Naive thymus-derived CD8-positive, alpha-beta T cell (primary cell): ENCODE measurements at regions of chr19 and their contacts with region 1.

Region 1: GRCh38 chr19:38647368-38647965 is at the start of gene ACTN4:
- DNase-seq: peak; percentile 99 to 100 (median 100)
- ATAC-seq: peak; percentile 88 to 94
- H3K4me3 Mint-ChIP-seq: peak within 1 kb of the TSS; percentile 86 to 95 (median 91)
- H3K27ac Mint-ChIP-seq: peak within 1 kb of the TSS; percentile 37 to 94 (median 86)
- H3K4me1 Mint-ChIP-seq: peaks cover 17 to 50% (median 28%) of the 10 kb centered on the region in 4 donors
- H3K27me3 Mint-ChIP-seq: peaks cover 12 to 47% (median 31%) of the 10 kb centered on the region in 5 donors
- polyA plus RNA-seq, gene ACTN4: 3.2 to 8.5 (median 4.8) TPM

Region 2: DNA sequence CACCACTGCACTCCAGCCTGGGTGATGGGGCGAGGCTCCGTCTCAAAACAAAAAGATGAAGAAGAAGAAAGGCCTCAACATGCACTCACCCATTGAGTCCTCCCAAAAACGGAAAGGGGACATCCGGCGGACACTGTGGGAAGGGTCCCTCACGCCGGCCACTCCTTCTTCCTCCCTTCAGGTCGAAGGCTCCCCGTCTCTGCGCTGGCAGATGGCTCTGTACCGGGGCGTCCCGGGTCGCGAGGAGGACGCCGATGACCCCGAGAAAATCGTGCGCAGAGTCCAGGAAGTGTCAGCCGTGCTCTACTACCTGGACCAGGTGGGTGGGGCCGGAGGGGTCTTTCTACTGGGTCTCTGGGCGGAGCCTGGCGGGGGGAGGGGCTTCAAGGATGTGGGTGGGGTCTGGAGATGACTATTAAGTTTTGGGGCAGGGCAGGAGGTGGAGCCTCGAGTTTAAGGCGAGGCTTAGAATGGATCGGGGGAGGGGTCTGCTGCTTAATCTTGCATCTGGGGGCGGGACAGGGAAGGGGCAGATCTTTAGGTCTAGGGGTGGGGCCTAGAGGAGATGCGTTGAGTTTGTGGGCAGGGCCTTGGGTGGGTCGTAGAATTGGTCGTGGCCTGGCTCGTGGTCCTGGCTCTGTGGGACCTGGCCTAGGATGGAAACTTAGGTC is 119.9 kb before region 1 on chr19:
- POLR2A ChIA-PET with region 1: no interaction called
- DNase-seq: peak in 1 of 10 donors; percentile 23
- ATAC-seq: peak in 1 of 2 donors; percentile 59
- H3K4me3 Mint-ChIP-seq: peak overlapping the region in 4 of 10 donors; percentile 3 to 67 (median 40)
- H3K27ac Mint-ChIP-seq: no peak overlapping the region
- H3K4me1 Mint-ChIP-seq: peaks cover 0 to 2% (median 0%) of the 10 kb centered on the region in 4 donors
- H3K27me3 Mint-ChIP-seq: peaks cover 0 to 11% (median 6%) of the 10 kb centered on the region in 5 donors

Region 3: GRCh38 chr19:38657633-38658222 is 10.3 kb after region 1 on chr19:
- POLR2A ChIA-PET with region 1: interaction called, 15 read pairs
- DNase-seq: peak in 2 of 10 donors; percentile 14 to 28
- ATAC-seq: no peak
- H3K4me3 Mint-ChIP-seq: peak overlapping the region in 7 of 10 donors; percentile 13 to 59 (median 40)
- H3K27ac Mint-ChIP-seq: peak overlapping the region in 8 of 10 donors; percentile 22 to 87 (median 58)
- H3K4me1 Mint-ChIP-seq: peaks cover 18 to 80% (median 48%) of the 10 kb centered on the region in 4 donors
- H3K27me3 Mint-ChIP-seq: peaks cover 12 to 79% (median 43%) of the 10 kb centered on the region in 5 donors